ENCODE measurements at regions of chr5 and their contacts with region 1.

Region 1: DNA sequence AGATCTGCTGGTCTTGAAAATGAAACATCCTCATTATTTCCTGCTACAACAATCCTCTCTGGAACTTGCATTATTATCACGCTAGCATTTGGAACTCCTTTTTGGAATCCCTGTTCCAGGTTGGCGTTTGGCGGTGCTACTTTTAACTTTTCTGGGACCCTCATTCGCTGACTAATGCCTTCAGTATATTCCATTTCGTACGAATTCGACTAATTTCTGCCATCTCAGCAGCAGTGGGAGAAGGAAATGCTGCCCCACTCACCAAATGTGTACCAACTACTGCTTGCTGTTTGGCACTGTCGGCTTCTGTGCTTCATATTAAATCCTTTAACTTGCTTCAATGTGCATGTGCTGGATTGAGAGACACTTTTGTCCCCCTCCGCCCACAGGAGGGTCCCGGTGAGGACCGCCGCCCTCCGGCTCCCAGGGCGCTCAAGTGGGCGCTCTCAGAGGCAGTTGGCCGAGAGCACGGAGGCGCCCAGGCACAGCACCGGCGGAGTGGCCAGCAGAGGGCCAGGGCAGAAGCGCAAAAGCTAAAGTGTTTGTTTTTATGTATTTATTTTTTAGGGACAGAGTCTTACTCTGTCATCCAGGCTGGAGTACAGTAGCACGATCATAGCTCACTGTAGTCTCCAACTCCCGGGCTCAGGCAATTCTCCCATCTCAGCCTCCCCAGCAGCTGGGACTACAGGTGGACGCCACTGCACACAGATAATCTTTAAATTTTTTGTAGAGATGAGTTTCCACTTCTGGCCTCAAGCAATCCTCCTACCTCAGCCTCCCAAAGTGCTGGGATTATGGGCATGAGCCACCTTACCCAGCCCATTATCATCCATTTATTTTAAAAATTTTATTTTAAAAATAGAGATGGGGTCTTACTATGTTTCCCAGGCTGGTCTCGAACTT is 11.9 kb downstream of the PDE6A start:
- DNase-seq: peak; percentile 54 to 69
- ATAC-seq: peak; percentile 95
- H3K4me3 ChIP-seq: peak overlapping the region; percentile 41
- H3K27ac ChIP-seq: peak overlapping the region; percentile 88 to 92
- H3K4me1 ChIP-seq: peaks cover 47% of the 10 kb centered on the region
- CTCF ChIP-seq: peak; percentile 78
- EP300 ChIP-seq: no peak
- POLR2A ChIP-seq: no peak
- RAD21 ChIP-seq: peak; percentile 61 to 72

Region 2: DNA sequence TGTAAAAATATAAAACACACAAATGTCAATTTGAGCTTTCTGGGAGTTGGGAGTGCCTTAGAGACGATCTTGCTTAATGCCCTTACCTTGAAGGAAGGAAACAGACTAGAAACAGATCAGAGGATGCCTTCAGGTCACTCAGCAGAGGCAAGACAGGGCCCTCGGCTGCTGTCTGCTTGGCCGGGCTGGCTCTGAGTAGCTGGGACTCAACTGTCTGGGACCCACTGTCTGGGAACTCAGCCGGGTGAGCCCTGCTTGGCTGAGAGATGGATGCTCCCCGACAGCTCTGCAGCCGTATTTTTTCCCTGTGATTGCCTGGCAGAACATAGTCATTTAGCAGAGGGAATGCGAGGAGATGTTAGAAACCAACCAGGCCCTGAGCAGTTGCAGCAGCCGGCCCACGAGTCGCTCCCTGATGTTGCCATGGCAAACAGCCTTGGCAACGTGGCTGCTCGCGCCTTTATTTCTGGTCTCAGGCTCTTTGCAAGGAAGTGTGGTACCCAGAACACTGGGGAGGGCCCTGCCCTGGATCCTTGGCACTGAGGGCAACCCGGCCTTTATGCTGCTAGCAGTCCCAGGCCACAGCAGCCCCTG is 191.7 kb before region 1 on chr5:
- CTCF ChIA-PET with region 1: no interaction called
- POLR2A ChIA-PET with region 1: no interaction called
- DNase-seq: no peak
- ATAC-seq: no peak
- H3K4me3 ChIP-seq: no peak overlapping the region
- H3K27ac ChIP-seq: no peak overlapping the region
- H3K4me1 ChIP-seq: no peaks in the 10 kb centered on the region
- CTCF ChIP-seq: no peak
- EP300 ChIP-seq: no peak
- POLR2A ChIP-seq: no peak
- RAD21 ChIP-seq: no peak

Region 3: GRCh38 chr5:149915392-149916260 is 17.1 kb before region 1 on chr5:
- CTCF ChIA-PET with region 1: interaction called, 13 read pairs
- POLR2A ChIA-PET with region 1: interaction called, 6 read pairs
- DNase-seq: no peak
- ATAC-seq: no peak
- H3K4me3 ChIP-seq: no peak overlapping the region
- H3K27ac ChIP-seq: no peak overlapping the region
- H3K4me1 ChIP-seq: no peaks in the 10 kb centered on the region
- CTCF ChIP-seq: no peak
- EP300 ChIP-seq: no peak
- POLR2A ChIP-seq: no peak
- RAD21 ChIP-seq: no peak

Region 4: DNA sequence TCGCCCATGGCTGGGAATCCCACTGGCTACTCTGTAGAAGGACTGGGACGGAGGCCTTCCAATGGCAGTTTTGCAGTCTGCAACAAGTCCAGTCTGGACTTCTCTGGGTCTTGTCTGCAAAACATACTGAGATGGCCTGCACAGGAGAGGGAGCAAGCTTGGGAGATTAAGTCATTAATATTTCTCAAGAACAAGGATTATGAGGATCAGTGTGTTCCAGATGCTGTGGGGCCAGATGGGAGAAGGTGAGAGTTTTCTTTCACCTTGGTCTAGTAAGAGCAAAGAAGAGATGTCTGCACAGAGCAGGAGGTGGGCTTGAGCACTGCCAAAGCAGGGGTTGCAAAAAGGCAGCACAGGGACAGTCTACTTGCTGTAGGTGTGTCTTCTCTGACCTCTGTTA is 12.0 kb after region 1 on chr5 and contains the start of gene PDE6A:
- CTCF ChIA-PET with region 1: interaction called, 25 read pairs
- POLR2A ChIA-PET with region 1: interaction called, 3 read pairs
- DNase-seq: no peak
- ATAC-seq: no peak
- H3K4me3 ChIP-seq: no peak within 1 kb of the TSS
- H3K27ac ChIP-seq: peak within 1 kb of the TSS; percentile 85 to 91; a peak in 4 of 6 replicates
- H3K4me1 ChIP-seq: peaks cover 38% of the 10 kb centered on the region
- CTCF ChIP-seq: no peak
- EP300 ChIP-seq: no peak
- POLR2A ChIP-seq: no peak
- RAD21 ChIP-seq: no peak
- polyA plus RNA-seq, gene PDE6A: 0.30 and 0.35 TPM in 2 replicates

Region 5: GRCh38 chr5:149951135-149951749 is 18.5 kb after region 1 on chr5:
- CTCF ChIA-PET with region 1: interaction called, 386 read pairs
- POLR2A ChIA-PET with region 1: interaction called, 3 read pairs
- DNase-seq: peak in 1 of 2 experiments; percentile 22
- ATAC-seq: peak in 1 of 2 experiments; percentile 75; a peak in 3 of 6 replicates
- H3K4me3 ChIP-seq: no peak overlapping the region
- H3K27ac ChIP-seq: peak overlapping the region; percentile 25 to 49; a peak in 3 of 6 replicates
- H3K4me1 ChIP-seq: no peaks in the 10 kb centered on the region; the same call in 1 of the 3 replicates
- CTCF ChIP-seq: no peak
- EP300 ChIP-seq: no peak
- POLR2A ChIP-seq: no peak
- RAD21 ChIP-seq: no peak

Region 6: DNA sequence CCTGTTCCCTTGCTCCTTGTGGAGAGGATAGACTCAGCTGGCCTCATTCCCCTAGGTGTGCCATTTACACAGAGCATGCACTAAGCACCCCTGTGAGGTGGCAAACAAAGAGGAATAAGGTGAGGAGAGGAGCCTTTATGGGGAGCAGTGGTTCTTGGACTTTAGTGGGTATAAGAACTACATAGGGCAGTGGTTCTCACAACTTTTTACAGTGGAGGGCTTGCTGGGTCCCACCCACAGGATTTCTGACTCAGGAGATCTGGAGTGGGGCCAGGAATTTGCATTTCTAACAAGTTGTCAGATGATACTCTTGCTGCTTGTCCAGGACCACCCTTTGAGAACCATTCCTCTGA is 111.6 kb after region 1 on chr5:
- CTCF ChIA-PET with region 1: no interaction called
- POLR2A ChIA-PET with region 1: no interaction called
- DNase-seq: no peak
- ATAC-seq: no peak
- H3K4me3 ChIP-seq: no peak overlapping the region
- H3K27ac ChIP-seq: no peak overlapping the region
- H3K4me1 ChIP-seq: no peaks in the 10 kb centered on the region
- CTCF ChIP-seq: no peak
- EP300 ChIP-seq: no peak
- POLR2A ChIP-seq: no peak
- RAD21 ChIP-seq: no peak

Region 7: GRCh38 chr5:150449517-150450339 is 517.0 kb after region 1 on chr5 and contains the start of gene RPS14:
- CTCF ChIA-PET with region 1: no interaction called
- POLR2A ChIA-PET with region 1: no interaction called
- DNase-seq: peak; percentile 96
- ATAC-seq: peak; percentile 95
- H3K4me3 ChIP-seq: peak within 1 kb of the TSS; percentile 78
- H3K27ac ChIP-seq: peak within 1 kb of the TSS; percentile 96
- H3K4me1 ChIP-seq: peaks cover 33% of the 10 kb centered on the region
- CTCF ChIP-seq: peak; percentile 88
- EP300 ChIP-seq: no peak
- POLR2A ChIP-seq: peak; percentile 81
- RAD21 ChIP-seq: no peak
- polyA plus RNA-seq, gene RPS14: 3,799 and 4,312 TPM in 2 replicates

Measured in A549 (cell line).